CD4-positive, alpha-beta T cell (primary cell): ENCODE measurements at regions of chr11 and their contacts with region 1.

Region 1: DNA sequence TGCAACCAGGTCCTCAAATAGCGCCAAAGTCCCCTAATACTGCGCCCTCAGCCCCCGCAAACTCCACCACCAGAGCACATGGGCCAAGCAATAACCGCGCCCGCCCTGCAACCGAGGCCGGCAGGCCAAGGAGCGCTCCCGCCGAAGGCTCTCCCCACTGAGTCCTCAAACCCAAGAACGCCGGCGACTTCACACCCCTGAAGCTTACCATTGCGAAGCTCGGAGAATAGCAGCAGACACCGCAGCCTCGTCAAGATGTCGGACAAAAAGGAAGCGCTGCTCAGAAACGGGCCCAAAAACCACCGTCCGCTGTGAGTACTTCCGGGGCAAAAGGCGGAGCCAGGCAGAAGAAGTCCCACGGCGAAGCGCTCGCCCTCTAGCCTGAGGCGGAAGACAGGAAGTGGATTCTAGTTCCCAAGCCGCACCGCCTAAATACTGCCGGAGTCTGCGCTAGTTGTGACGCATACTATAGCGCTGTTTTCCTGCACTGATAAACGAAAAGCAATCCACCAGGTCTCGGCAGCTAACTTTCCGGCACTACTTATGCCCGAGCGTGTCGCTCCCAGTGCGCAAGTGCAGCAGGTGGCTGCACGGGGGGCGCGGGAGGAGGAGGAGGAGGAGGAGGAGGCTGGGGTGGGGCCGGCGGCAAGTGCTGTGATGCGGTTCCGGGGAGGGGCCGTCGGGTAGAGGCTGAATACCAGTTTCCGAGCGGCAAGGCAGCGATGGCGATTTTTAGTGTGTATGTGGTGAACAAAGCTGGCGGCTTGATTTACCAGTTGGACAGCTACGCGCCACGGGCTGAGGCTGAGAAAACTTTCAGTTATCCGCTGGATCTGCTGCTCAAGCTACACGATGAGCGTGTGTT is at the starts of genes RPS25 and TRAPPC4:
- DNase-seq: peak; percentile 92 to 99 (median 94)
- ATAC-seq: peak; percentile 83
- H3K4me3 ChIP-seq: peak within 1 kb of the TSS; percentile 63
- H3K4me3 Mint-ChIP-seq: peak within 1 kb of the TSS; percentile 100
- H3K27ac ChIP-seq: peak within 1 kb of the TSS; percentile 93
- H3K27ac Mint-ChIP-seq: peak within 1 kb of the TSS; percentile 99
- H3K4me1 ChIP-seq: peaks cover 58% of the 10 kb centered on the region
- H3K4me1 Mint-ChIP-seq: peaks cover 62% of the 10 kb centered on the region
- H3K27me3 ChIP-seq: no peaks in the 10 kb centered on the region
- H3K27me3 Mint-ChIP-seq: no peaks in the 10 kb centered on the region
- CTCF ChIP-seq: no peak
- total RNA-seq, gene RPS25: 2,261 to 2,296 TPM
- total RNA-seq, gene TRAPPC4: 101 to 106 TPM

Region 2: DNA sequence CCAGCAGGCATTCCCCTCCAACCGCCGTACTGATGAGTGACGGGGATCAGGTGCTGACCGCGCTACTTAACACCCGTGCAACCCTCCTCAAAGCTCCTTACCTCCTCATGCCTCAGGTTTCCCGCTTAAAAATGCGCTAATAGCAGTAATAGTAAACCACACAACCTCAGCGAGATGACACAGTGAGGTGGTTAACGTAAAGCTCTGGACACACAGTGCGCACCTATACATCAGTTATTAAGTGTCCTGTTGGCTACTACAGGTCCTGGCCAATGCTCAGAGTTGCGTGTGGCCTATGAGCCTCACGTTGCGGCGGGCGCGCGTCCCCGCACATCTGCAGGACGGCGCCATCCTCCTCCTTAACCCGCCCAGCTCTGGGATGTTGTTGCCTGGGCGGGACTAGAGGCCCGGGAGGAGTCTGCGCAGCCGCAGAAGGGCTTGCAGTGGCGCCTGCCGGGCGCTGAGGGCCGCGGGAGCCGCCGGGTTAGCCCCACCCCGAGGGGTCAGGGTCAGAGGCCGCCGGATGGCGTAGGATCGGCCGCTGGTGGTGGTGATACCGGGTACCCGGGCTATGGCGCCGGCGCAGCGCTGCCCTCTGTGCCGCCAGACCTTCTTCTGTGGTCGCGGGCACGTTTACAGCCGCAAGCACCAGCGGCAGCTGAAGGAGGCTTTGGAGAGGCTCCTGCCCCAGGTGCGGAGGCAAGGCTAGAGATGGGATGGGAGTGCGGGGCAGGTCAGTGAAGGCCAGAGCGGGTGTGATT is 20.5 kb before region 1 on chr11 and contains the start of gene CENATAC:
- CTCF ChIA-PET with region 1: interaction called, 7 read pairs
- POLR2A ChIA-PET with region 1: interaction called, 74 read pairs
- intact Hi-C with region 1: loop called (anchors 1 kb)
- DNase-seq: peak; percentile 90 to 98 (median 96)
- ATAC-seq: peak; percentile 91
- H3K4me3 ChIP-seq: peak within 1 kb of the TSS; percentile 74
- H3K4me3 Mint-ChIP-seq: peak within 1 kb of the TSS; percentile 98
- H3K27ac ChIP-seq: peak within 1 kb of the TSS; percentile 74 to 78
- H3K27ac Mint-ChIP-seq: peak within 1 kb of the TSS; percentile 90
- H3K4me1 ChIP-seq: peaks cover 31% of the 10 kb centered on the region
- H3K4me1 Mint-ChIP-seq: peaks cover 46% of the 10 kb centered on the region
- H3K27me3 ChIP-seq: no peaks in the 10 kb centered on the region
- H3K27me3 Mint-ChIP-seq: no peaks in the 10 kb centered on the region
- CTCF ChIP-seq: no peak
- total RNA-seq, gene CENATAC: 121 to 122 TPM

Region 3: GRCh38 chr11:119030329-119031049 is 12.2 kb after region 1 on chr11 and contains the start of gene SLC37A4:
- CTCF ChIA-PET with region 1: interaction called, 13 read pairs
- POLR2A ChIA-PET with region 1: interaction called, 94 read pairs
- intact Hi-C with region 1: loop called (anchors 1 kb)
- DNase-seq: peak; percentile 96 to 100 (median 99)
- ATAC-seq: peak; percentile 95
- H3K4me3 ChIP-seq: peak within 1 kb of the TSS; percentile 91
- H3K4me3 Mint-ChIP-seq: peak within 1 kb of the TSS; percentile 96
- H3K27ac ChIP-seq: peak within 1 kb of the TSS; percentile 73 to 74
- H3K27ac Mint-ChIP-seq: peak within 1 kb of the TSS; percentile 92
- H3K4me1 ChIP-seq: peaks cover 29% of the 10 kb centered on the region
- H3K4me1 Mint-ChIP-seq: peaks cover 22% of the 10 kb centered on the region
- H3K27me3 ChIP-seq: no peaks in the 10 kb centered on the region
- H3K27me3 Mint-ChIP-seq: no peaks in the 10 kb centered on the region
- CTCF ChIP-seq: peak; percentile 75
- total RNA-seq, gene SLC37A4: 5.2 to 6.6 TPM

Region 4: DNA sequence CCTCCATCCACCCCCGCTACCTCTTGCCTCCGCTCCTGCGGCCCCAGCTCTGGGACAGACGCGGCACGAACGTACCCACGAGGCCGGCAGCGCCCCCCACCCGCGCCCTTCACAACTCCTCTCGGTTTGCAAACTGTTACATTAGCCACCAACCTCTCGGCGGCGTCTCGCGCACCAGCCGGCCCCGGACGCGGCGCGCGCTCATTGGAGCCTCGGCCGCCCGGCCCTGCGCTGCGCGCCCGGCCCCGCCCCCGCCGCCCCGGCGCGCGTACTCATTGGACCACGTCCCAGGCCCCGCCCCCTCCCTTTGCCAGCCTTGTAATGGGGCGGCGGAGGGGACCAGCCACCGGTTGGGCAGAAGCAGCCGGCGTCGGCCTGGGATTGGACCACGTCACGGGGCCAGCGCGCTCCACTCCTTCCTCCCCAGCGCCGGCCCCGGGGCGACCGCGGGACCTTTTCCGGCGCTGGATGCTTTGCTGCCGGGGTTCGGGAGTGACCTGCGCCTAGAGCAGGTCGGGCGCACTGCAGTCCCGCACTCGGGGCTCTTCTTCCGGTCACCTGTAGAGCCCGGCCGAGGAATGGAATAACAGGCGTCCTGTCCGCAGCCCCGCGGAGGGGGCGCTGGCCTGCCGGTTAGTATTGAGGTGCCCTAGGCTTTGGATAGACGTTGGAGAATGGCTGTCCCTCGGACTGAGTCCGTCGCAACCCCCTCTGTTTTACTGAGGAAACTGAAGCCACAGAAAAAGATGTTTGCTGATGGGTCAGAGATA is 38.9 kb after region 1 on chr11 and contains the start of gene HYOU1:
- CTCF ChIA-PET with region 1: interaction called, 4 read pairs
- POLR2A ChIA-PET with region 1: interaction called, 14 read pairs
- intact Hi-C with region 1: loop called in 1 of 2 experiments (anchors 1 kb)
- DNase-seq: peak; percentile 97 to 99 (median 98)
- ATAC-seq: peak; percentile 92
- H3K4me3 ChIP-seq: peak within 1 kb of the TSS; percentile 82
- H3K4me3 Mint-ChIP-seq: peak within 1 kb of the TSS; percentile 99
- H3K27ac ChIP-seq: peak within 1 kb of the TSS; percentile 83 to 84
- H3K27ac Mint-ChIP-seq: peak within 1 kb of the TSS; percentile 80
- H3K4me1 ChIP-seq: peaks cover 32% of the 10 kb centered on the region
- H3K4me1 Mint-ChIP-seq: peaks cover 36% of the 10 kb centered on the region
- H3K27me3 ChIP-seq: no peaks in the 10 kb centered on the region
- H3K27me3 Mint-ChIP-seq: no peaks in the 10 kb centered on the region
- CTCF ChIP-seq: peak; percentile 2
- total RNA-seq, gene HYOU1: 76.5 to 81.4 TPM

Region 5: GRCh38 chr11:119084663-119085436 is 66.5 kb after region 1 on chr11 and contains the start of gene HMBS:
- CTCF ChIA-PET with region 1: no interaction called
- POLR2A ChIA-PET with region 1: interaction called, 12 read pairs
- intact Hi-C with region 1: no loop called
- DNase-seq: peak; percentile 70 to 96 (median 88)
- ATAC-seq: peak; percentile 94
- H3K4me3 ChIP-seq: peak within 1 kb of the TSS; percentile 79
- H3K4me3 Mint-ChIP-seq: peak within 1 kb of the TSS; percentile 92
- H3K27ac ChIP-seq: peak within 1 kb of the TSS; percentile 74 to 81
- H3K27ac Mint-ChIP-seq: peak within 1 kb of the TSS; percentile 88
- H3K4me1 ChIP-seq: peaks cover 26% of the 10 kb centered on the region
- H3K4me1 Mint-ChIP-seq: peaks cover 25% of the 10 kb centered on the region
- H3K27me3 ChIP-seq: no peaks in the 10 kb centered on the region
- H3K27me3 Mint-ChIP-seq: no peaks in the 10 kb centered on the region
- CTCF ChIP-seq: no peak
- total RNA-seq, gene HMBS: 3.4 to 4.1 TPM

Region 6: GRCh38 chr11:119196833-119197483 is 178.7 kb after region 1 on chr11:
- CTCF ChIA-PET with region 1: no interaction called
- POLR2A ChIA-PET with region 1: no interaction called
- intact Hi-C with region 1: loop called in 1 of 2 experiments (anchors 5 kb)
- DNase-seq: peak; percentile 36 to 90 (median 64)
- ATAC-seq: peak; percentile 99
- H3K4me3 ChIP-seq: no peak overlapping the region
- H3K4me3 Mint-ChIP-seq: no peak overlapping the region
- H3K27ac ChIP-seq: no peak overlapping the region
- H3K27ac Mint-ChIP-seq: no peak overlapping the region
- H3K4me1 ChIP-seq: no peaks in the 10 kb centered on the region
- H3K4me1 Mint-ChIP-seq: peaks cover 5% of the 10 kb centered on the region
- H3K27me3 ChIP-seq: no peaks in the 10 kb centered on the region
- H3K27me3 Mint-ChIP-seq: no peaks in the 10 kb centered on the region
- CTCF ChIP-seq: peak; percentile 85